GM12878 (cell line): ENCODE measurements at regions of chr10 and their contacts with region 1.

Region 1: DNA sequence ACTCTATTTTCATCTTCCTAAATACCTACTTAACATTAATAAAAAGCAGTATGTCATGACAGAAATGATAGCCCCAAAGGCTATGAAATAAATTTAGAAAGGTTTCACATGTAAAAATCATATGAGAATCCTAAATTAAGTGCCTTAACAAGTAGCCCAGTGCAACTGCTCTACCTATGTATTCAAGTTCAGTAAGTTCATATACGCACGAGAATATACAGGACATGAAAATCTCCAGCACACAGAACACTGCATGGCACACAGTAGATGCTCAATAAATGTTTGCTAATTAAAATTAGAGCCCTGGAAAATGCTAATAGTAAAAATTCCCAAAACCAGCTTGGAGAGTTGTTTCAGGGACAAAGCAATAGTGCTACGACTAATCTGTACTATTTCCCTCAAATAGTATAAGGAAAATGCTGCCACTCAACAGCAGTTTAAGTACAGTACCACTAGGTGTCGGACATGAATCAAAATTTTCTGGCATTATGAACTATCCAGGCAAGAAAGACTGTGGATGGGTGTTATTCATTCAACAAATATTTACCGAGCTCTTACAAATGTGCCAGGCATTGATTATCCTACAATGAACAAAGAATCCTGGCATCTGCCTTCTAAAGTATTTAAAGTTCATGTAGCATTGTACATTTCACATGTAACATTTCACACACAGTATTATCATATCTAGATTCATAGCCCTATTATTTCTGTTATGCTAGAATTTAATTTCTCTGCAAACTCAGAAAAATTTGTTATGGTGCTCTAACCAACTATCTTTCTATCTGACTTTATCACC is 80.9 kb downstream of the ARHGAP21 start:
- DNase-seq: peak; percentile 40
- ATAC-seq: peak; percentile 86
- H3K4me3 ChIP-seq: no peak overlapping the region
- H3K27ac ChIP-seq: no peak overlapping the region
- H3K4me1 ChIP-seq: peaks cover 14% of the 10 kb centered on the region
- H3K27me3 ChIP-seq: no peaks in the 10 kb centered on the region
- CTCF ChIP-seq: peak; percentile 74 to 85 (median 83)
- EP300 ChIP-seq: no peak
- POLR2A ChIP-seq: no peak
- RAD21 ChIP-seq: peak; percentile 96

Region 2: DNA sequence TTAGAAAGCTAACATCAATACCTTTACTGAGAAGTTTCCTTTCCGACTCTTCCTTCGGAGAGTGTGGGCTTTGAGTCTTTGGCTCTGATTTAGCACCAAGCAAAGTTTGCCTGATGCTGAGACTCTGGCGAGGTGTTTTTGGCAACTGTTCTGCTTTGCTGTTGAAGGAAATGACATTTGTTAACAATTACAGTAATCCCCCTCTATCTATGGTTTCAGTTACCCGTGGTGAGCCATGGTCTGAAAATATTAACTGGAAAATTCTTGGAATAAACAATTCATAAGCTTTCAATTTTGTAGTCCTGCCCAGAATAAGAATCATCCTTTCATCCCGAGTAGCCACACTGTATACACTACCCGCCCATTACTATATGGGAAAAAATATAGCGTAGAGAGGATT is 45.4 kb before region 1 on chr10:
- CTCF ChIA-PET with region 1: no interaction called
- POLR2A ChIA-PET with region 1: no interaction called
- RAD21 ChIA-PET with region 1: no interaction called
- SMC1A ChIA-PET with region 1: no interaction called
- in situ Hi-C with region 1: no loop called
- intact Hi-C with region 1: no loop called
- DNase-seq: no peak
- ATAC-seq: no peak
- H3K4me3 ChIP-seq: no peak overlapping the region
- H3K27ac ChIP-seq: no peak overlapping the region
- H3K4me1 ChIP-seq: no peaks in the 10 kb centered on the region
- H3K27me3 ChIP-seq: no peaks in the 10 kb centered on the region
- CTCF ChIP-seq: no peak
- EP300 ChIP-seq: no peak
- POLR2A ChIP-seq: no peak
- RAD21 ChIP-seq: no peak

Region 3: GRCh38 chr10:24617771-24618391 is 24.9 kb before region 1 on chr10:
- CTCF ChIA-PET with region 1: interaction called, 27 read pairs
- POLR2A ChIA-PET with region 1: interaction called, 5 read pairs
- RAD21 ChIA-PET with region 1: interaction called, 6 read pairs
- SMC1A ChIA-PET with region 1: interaction called, 9 read pairs
- in situ Hi-C with region 1: no loop called
- intact Hi-C with region 1: no loop called
- DNase-seq: no peak
- ATAC-seq: peak; percentile 88
- H3K4me3 ChIP-seq: no peak overlapping the region
- H3K27ac ChIP-seq: no peak overlapping the region
- H3K4me1 ChIP-seq: no peaks in the 10 kb centered on the region
- H3K27me3 ChIP-seq: no peaks in the 10 kb centered on the region
- CTCF ChIP-seq: peak; percentile 73 to 84 (median 80)
- EP300 ChIP-seq: no peak
- POLR2A ChIP-seq: no peak
- RAD21 ChIP-seq: peak; percentile 56

Region 4: DNA sequence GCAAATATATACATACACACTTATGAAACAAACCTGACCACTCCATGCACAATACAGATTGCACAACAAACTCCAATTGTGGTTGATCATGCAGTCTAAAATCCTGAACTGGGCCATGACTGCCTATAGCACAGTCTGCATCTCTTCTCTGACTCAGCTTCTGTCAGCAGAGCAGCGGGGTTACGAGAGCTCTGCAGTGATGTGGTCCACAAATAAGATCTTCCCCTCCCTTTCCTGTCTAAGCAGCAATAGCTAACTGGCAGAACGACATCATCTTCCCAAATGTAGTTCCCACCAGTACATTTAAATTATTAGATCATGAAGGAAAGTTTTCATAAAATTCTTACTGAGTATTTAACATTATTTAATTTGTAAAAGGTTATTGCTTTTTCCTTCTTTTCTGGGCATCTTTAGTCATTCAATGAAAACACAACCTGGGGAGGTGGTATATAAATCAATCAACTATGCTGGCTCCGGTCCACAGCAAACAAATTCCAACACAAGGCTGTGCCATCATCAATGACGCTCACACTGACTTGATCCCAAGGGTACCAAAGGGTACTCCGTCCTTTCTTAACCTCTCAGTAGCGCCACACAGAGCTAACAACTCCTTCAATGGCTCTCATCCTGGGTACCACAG is 63.8 kb after region 1 on chr10:
- CTCF ChIA-PET with region 1: interaction called, 5 read pairs
- POLR2A ChIA-PET with region 1: interaction called, 6 read pairs
- RAD21 ChIA-PET with region 1: interaction called, 7 read pairs
- SMC1A ChIA-PET with region 1: interaction called, 14 read pairs
- in situ Hi-C with region 1: no loop called
- intact Hi-C with region 1: no loop called
- DNase-seq: no peak
- ATAC-seq: peak; percentile 81
- H3K4me3 ChIP-seq: no peak overlapping the region
- H3K27ac ChIP-seq: no peak overlapping the region
- H3K4me1 ChIP-seq: peaks cover 9% of the 10 kb centered on the region; the same call in 1 of the 2 replicates
- H3K27me3 ChIP-seq: no peaks in the 10 kb centered on the region
- CTCF ChIP-seq: no peak
- EP300 ChIP-seq: no peak
- POLR2A ChIP-seq: no peak
- RAD21 ChIP-seq: no peak

Region 5: GRCh38 chr10:24887855-24888231 is 245.0 kb after region 1 on chr10:
- CTCF ChIA-PET with region 1: interaction called, 4 read pairs
- POLR2A ChIA-PET with region 1: no interaction called
- RAD21 ChIA-PET with region 1: interaction called, 3 read pairs
- SMC1A ChIA-PET with region 1: interaction called, 8 read pairs
- in situ Hi-C with region 1: no loop called
- intact Hi-C with region 1: loop called (anchors 5 kb)
- DNase-seq: no peak
- ATAC-seq: peak; percentile 22
- H3K4me3 ChIP-seq: no peak overlapping the region
- H3K27ac ChIP-seq: peak overlapping the region; percentile 16
- H3K4me1 ChIP-seq: peaks cover 3% of the 10 kb centered on the region; the same call in 1 of the 2 replicates
- H3K27me3 ChIP-seq: no peaks in the 10 kb centered on the region
- CTCF ChIP-seq: no peak
- EP300 ChIP-seq: no peak; a peak in 1 of 4 replicates
- POLR2A ChIP-seq: no peak
- RAD21 ChIP-seq: no peak

Region 6: GRCh38 chr10:24989867-24990266 is 347.0 kb after region 1 on chr10:
- CTCF ChIA-PET with region 1: interaction called, 34 read pairs
- POLR2A ChIA-PET with region 1: interaction called, 3 read pairs
- RAD21 ChIA-PET with region 1: interaction called, 16 read pairs
- SMC1A ChIA-PET with region 1: interaction called, 41 read pairs
- in situ Hi-C with region 1: no loop called
- intact Hi-C with region 1: loop called (anchors 1 kb)
- DNase-seq: no peak
- ATAC-seq: no peak
- H3K4me3 ChIP-seq: no peak overlapping the region
- H3K27ac ChIP-seq: no peak overlapping the region
- H3K4me1 ChIP-seq: no peaks in the 10 kb centered on the region
- H3K27me3 ChIP-seq: no peaks in the 10 kb centered on the region
- CTCF ChIP-seq: no peak; a peak in 1 of 6 replicates
- EP300 ChIP-seq: no peak
- POLR2A ChIP-seq: no peak
- RAD21 ChIP-seq: peak; percentile 8; the same call in 1 of the 2 replicates

Region 7: DNA sequence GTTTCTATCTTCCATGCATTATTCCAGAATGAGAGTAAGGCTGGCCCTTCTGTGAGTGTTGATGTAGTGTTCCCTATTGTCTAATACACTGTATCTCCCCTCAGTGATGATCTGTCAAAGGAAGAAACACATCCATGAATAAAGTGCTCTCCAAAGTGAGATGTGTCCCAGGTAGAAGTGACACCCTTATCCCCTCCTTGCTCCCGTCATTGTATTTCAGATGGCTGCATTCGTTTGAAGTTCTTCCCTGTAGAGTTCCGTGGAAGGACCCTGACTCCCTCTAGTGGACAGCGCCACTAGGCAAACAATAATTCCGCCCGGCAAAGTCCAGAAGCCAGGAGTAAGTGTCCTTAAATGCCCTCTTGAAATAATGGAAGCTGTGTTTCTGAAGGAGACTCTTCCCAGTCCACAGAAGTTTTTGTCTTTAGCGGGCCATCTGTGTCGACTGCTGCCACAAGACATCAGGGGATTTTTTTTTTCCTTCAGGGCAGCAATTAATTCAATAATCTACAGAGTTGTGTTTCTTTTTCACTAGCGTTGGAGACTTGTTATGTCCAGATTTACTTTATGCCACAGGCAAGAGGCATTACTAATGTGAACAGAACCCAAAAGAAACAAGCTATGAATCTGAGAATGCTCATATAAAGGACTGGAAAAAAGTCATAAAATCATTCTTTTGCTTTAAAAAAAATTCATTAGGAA is 438.2 kb after region 1 on chr10:
- CTCF ChIA-PET with region 1: interaction called, 50 read pairs
- POLR2A ChIA-PET with region 1: no interaction called
- RAD21 ChIA-PET with region 1: interaction called, 35 read pairs
- SMC1A ChIA-PET with region 1: interaction called, 47 read pairs
- in situ Hi-C with region 1: no loop called
- intact Hi-C with region 1: loop called (anchors 1 kb)
- DNase-seq: peak; percentile 30
- ATAC-seq: peak; percentile 90
- H3K4me3 ChIP-seq: no peak overlapping the region
- H3K27ac ChIP-seq: no peak overlapping the region
- H3K4me1 ChIP-seq: peaks cover 4% of the 10 kb centered on the region; the same call in 1 of the 2 replicates
- H3K27me3 ChIP-seq: no peaks in the 10 kb centered on the region; a peak in 1 of 4 replicates
- CTCF ChIP-seq: peak; percentile 90 to 92 (median 91)
- EP300 ChIP-seq: no peak
- POLR2A ChIP-seq: no peak
- RAD21 ChIP-seq: peak; percentile 96